Mammary epithelial cell (primary cell): ENCODE measurements at regions of chr14 and their contacts with region 1.

Region 1: GRCh38 chr14:56112781-56113180 is 5.4 kb upstream of the PELI2 start:
- DNase-seq: no peak
- H3K4me3 ChIP-seq: no peak overlapping the region
- H3K27ac ChIP-seq: no peak overlapping the region
- H3K4me1 ChIP-seq: peaks cover 2% of the 10 kb centered on the region
- H3K27me3 ChIP-seq: peaks cover 5% of the 10 kb centered on the region
- CTCF ChIP-seq: no peak

Region 2: GRCh38 chr14:56092763-56093162 is 20.0 kb before region 1 on chr14:
- CTCF ChIA-PET with region 1: interaction called, 10 read pairs
- dilution Hi-C with region 1: no loop called
- in situ Hi-C with region 1: no loop called
- intact Hi-C with region 1: no loop called
- DNase-seq: no peak
- H3K4me3 ChIP-seq: no peak overlapping the region
- H3K27ac ChIP-seq: no peak overlapping the region
- H3K4me1 ChIP-seq: no peaks in the 10 kb centered on the region
- H3K27me3 ChIP-seq: no peaks in the 10 kb centered on the region
- CTCF ChIP-seq: no peak